ENCODE measurements at regions of chr16 and their contacts with region 1.

Region 1: GRCh38 chr16:57316390-57317017 is 32.0 kb upstream of the PLLP start:
- DNase-seq: no peak
- CTCF ChIP-seq: no peak

Region 2: DNA sequence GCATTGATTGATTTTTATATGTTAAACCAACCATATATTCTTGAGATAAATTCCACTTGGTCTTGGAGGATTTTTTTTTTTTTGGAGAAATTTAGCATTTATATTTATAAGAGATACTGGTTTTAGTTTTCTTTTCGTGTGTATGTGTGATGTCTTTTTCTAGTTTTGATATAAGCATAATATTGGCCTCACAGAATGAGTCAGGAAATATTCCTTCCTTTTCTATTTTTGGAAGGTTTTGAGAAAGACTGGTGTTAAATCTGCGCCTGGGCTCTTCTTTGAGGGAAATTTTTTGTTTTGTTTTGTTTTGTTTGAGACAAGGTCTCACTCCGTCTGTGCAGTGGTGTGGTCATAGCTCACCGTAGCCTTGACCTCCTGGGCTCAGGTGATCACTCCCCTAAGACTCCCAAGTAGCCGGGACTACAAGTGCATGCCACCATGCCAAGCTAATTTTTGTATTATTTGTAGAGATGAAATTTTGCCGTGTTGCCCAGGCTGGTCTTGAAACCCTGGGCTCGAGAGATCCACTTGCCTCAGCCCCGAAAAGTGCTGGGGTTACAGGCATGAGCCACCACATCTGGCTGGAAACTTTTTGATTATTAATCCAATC is 13.3 kb after region 1 on chr16:
- CTCF ChIA-PET with region 1: interaction called, 10 read pairs
- POLR2A ChIA-PET with region 1: no interaction called
- DNase-seq: no peak
- CTCF ChIP-seq: no peak

Region 3: DNA sequence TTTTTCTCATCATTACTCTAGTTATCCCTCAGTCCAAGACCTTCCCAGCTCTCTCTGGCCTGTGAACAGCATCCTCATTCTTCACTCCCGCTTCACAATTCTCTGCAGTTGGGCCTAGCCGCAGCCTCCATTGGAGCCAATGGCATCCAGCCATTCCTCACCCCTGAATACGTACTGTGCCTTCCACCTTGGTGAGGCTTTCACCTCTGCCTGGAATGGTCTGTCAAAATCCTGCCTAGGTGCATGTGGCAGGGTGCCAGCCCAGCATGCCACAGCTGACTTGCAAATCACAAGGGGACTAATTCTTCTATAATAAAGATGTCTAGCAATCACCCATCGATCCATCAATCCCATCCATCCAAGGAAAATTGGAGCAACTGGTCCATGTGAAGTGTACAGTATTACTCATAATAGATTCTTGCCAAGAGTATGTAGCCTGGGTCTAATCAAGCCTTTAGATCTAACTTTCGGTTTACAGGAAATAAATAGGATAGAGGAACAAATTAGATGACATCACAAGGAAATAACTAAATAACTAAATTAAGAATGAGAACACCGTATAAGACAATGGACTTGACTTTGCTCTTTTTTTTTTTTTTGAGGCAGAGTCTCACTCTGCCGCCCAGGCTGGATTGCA is 50.7 kb after region 1 on chr16:
- CTCF ChIA-PET with region 1: no interaction called
- POLR2A ChIA-PET with region 1: no interaction called
- DNase-seq: no peak
- CTCF ChIP-seq: no peak

Region 4: GRCh38 chr16:57388359-57389086 is 72.0 kb after region 1 on chr16:
- CTCF ChIA-PET with region 1: no interaction called
- POLR2A ChIA-PET with region 1: no interaction called
- DNase-seq: no peak
- CTCF ChIP-seq: no peak

Measured in GM10248 (cell line).